Activated B cell treated with CpG ODN at 0.5 μM for 24 hours (primary cell): ENCODE measurements at regions of chr7 and their contacts with region 1.

Region 1: GRCh38 chr7:148962823-148963582 is 65.3 kb downstream of the PDIA4 start:
- DNase-seq: no peak
- ATAC-seq: peak; percentile 53
- H3K4me3 Mint-ChIP-seq: peak overlapping the region; percentile 93
- H3K27ac Mint-ChIP-seq: peak overlapping the region; percentile 87
- H3K4me1 Mint-ChIP-seq: peaks cover 29% of the 10 kb centered on the region
- H3K27me3 Mint-ChIP-seq: no peaks in the 10 kb centered on the region
- CTCF ChIP-seq: no peak

Region 2: DNA sequence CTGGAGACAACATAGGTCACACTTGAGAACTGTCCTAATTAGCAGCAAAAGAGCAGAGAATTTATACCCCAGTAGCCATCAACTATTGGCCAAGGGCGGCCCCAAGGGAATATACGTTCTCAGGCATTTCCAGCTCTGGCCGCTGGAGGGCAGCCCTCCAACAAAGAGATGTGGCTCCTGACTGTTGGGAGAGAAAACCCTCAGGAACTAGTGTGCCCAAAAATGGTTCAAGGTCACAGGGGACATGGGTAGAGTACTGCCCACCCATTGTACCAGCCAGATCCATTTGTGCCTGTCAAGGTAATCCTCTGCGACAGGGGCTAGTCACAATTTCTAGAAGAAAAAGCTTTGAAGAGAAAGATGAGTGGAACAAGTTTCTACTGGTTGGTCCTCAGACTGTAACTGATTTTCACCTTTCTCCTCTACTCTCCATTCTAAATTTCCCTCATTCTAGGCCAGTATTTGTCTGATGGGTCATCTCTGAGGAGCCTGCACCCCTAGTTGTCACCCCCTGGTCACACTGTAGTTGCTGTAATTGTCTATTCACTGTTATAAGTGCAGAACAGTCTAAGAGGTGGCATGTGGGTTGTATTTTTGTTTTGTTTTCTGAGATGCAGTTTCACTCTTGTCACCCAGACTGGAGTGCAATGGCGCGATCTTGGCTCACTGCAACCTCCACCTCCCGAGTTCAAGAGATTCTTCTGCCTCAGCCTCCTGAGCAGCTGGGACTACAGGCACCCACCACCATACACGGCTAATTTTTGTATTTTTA is 387.2 kb before region 1 on chr7:
- CTCF ChIA-PET with region 1: interaction called, 20 read pairs
- POLR2A ChIA-PET with region 1: no interaction called
- intact Hi-C with region 1: loop called (anchors 1 kb)
- DNase-seq: peak; percentile 56
- ATAC-seq: peak; percentile 88
- H3K4me3 Mint-ChIP-seq: no peak overlapping the region
- H3K27ac Mint-ChIP-seq: no peak overlapping the region
- H3K4me1 Mint-ChIP-seq: peaks cover 2% of the 10 kb centered on the region
- H3K27me3 Mint-ChIP-seq: peaks cover 2% of the 10 kb centered on the region
- CTCF ChIP-seq: no peak

Region 3: DNA sequence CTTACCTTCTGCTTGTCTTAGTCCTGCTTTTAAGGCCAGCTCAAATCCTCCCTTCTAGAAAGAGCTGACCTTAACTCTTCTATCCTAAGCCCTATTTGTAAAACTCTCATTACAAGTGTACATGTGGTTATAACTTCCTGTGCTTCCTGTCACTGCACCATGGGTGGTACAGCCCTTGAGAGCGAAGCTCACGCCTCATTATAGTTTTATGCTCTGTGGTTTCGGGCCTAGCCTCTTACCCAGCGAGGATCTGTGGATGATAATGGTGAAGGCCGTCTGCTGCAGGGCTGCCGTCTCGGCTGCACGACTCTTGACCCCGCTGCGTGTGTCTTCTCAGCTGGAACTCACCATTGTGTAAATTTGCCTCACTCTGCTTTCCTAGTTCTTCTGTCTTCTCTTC is 189.7 kb before region 1 on chr7:
- CTCF ChIA-PET with region 1: no interaction called
- POLR2A ChIA-PET with region 1: no interaction called
- intact Hi-C with region 1: loop called (anchors 5 kb)
- DNase-seq: no peak
- ATAC-seq: peak; percentile 71
- H3K4me3 Mint-ChIP-seq: no peak overlapping the region
- H3K27ac Mint-ChIP-seq: peak overlapping the region; percentile 64
- H3K4me1 Mint-ChIP-seq: peaks cover 13% of the 10 kb centered on the region
- H3K27me3 Mint-ChIP-seq: no peaks in the 10 kb centered on the region
- CTCF ChIP-seq: no peak

Region 4: DNA sequence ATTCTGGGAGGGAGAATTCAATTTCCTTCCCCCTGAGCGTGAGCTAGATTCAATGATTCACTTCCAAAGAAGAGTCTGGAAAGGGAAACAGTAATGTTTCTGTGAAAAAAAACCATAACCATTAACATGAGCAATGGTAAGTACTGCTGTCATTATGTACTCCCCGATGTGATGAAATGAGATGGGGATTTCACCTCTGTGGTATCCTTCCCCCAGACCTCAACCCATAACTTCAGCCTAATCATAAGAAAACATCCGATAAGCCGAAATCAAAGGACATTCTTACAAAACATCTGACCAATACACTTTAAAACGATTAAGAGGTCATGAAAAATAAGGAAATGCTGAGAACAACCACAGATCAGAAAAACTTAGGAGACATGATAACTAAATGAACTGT is 106.1 kb before region 1 on chr7:
- CTCF ChIA-PET with region 1: interaction called, 22 read pairs
- POLR2A ChIA-PET with region 1: no interaction called
- intact Hi-C with region 1: loop called (anchors 1 kb)
- DNase-seq: no peak
- ATAC-seq: no peak
- H3K4me3 Mint-ChIP-seq: no peak overlapping the region
- H3K27ac Mint-ChIP-seq: no peak overlapping the region
- H3K4me1 Mint-ChIP-seq: peaks cover 11% of the 10 kb centered on the region
- H3K27me3 Mint-ChIP-seq: no peaks in the 10 kb centered on the region
- CTCF ChIP-seq: no peak

Region 5: GRCh38 chr7:148987010-148987750 is 24.2 kb after region 1 on chr7:
- CTCF ChIA-PET with region 1: interaction called, 5 read pairs
- POLR2A ChIA-PET with region 1: interaction called, 9 read pairs
- intact Hi-C with region 1: loop called (anchors 1 kb)
- DNase-seq: peak; percentile 60
- ATAC-seq: peak; percentile 85
- H3K4me3 Mint-ChIP-seq: peak overlapping the region; percentile 96
- H3K27ac Mint-ChIP-seq: peak overlapping the region; percentile 93
- H3K4me1 Mint-ChIP-seq: peaks cover 50% of the 10 kb centered on the region
- H3K27me3 Mint-ChIP-seq: peaks cover 2% of the 10 kb centered on the region
- CTCF ChIP-seq: no peak